Colonic mucosa (tissue), 4 donors: ENCODE measurements at regions of chr17 and their contacts with region 1.

Region 1: GRCh38 chr17:77054936-77055335 is 85.8 kb upstream of the SEC14L1 start:
- DNase-seq: no peak
- H3K4me3 ChIP-seq: no peak overlapping the region
- H3K27ac ChIP-seq: no peak overlapping the region
- H3K4me1 ChIP-seq: no peaks in the 10 kb centered on the region
- H3K27me3 ChIP-seq: no peaks in the 10 kb centered on the region
- CTCF ChIP-seq: no peak

Region 2: DNA sequence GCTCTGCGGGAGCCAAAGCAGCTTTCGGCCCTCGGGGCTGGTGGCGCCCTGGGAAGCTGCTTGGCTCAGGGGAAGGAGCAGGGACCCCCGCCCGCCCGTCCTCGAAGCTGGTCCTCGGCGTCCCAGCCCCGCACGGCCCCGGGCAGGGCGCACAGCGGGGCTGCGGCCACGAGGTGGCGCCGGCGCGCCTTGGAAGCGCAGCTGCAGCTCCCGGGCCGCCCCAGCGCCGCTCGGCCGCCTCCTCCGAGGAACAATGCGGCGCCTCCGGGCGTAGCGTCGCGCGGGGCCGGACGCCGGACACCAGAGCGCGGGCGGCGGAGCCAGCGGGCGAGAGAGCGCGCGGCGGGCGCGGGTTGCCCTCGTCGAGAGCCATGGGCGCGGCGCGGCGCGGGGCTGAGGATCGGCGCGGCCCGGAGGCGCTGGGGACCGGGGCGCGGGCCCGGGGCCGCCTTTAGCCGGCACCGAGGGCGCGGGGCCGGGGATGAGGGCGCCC is 186.7 kb before region 1 on chr17 and contains the start of gene MGAT5B:
- intact Hi-C with region 1: loop called (anchors 5 kb)
- DNase-seq: peak; percentile 63
- H3K4me3 ChIP-seq: no peak within 1 kb of the TSS
- H3K27ac ChIP-seq: no peak within 1 kb of the TSS
- H3K4me1 ChIP-seq: no peaks in the 10 kb centered on the region
- H3K27me3 ChIP-seq: peaks cover 24% of the 10 kb centered on the region
- CTCF ChIP-seq: peak; percentile 77
- total RNA-seq, gene MGAT5B: 0.05 to 0.27 TPM

Region 3: GRCh38 chr17:77516902-77517301 is 462.0 kb after region 1 on chr17:
- intact Hi-C with region 1: no loop called
- DNase-seq: no peak
- H3K4me3 ChIP-seq: no peak overlapping the region
- H3K27ac ChIP-seq: no peak overlapping the region
- H3K4me1 ChIP-seq: no peaks in the 10 kb centered on the region
- H3K27me3 ChIP-seq: no peaks in the 10 kb centered on the region
- CTCF ChIP-seq: no peak